Activated T-helper 1 cell treated with anti-CD3 and anti-CD28 coated beads, Interleukin-12 subunit alpha, Interleukin-12 subunit beta, Interleukin-2, Interleukin-4 antibody, amounts not matched to agents 30 ng/mL and 10 ng/mL and 1 ng/mL, durations not matched to agents 14 hours and 24 hours and 36 hours (primary cell): ENCODE measurements at regions of chr4 and their contacts with region 1.

Region 1: DNA sequence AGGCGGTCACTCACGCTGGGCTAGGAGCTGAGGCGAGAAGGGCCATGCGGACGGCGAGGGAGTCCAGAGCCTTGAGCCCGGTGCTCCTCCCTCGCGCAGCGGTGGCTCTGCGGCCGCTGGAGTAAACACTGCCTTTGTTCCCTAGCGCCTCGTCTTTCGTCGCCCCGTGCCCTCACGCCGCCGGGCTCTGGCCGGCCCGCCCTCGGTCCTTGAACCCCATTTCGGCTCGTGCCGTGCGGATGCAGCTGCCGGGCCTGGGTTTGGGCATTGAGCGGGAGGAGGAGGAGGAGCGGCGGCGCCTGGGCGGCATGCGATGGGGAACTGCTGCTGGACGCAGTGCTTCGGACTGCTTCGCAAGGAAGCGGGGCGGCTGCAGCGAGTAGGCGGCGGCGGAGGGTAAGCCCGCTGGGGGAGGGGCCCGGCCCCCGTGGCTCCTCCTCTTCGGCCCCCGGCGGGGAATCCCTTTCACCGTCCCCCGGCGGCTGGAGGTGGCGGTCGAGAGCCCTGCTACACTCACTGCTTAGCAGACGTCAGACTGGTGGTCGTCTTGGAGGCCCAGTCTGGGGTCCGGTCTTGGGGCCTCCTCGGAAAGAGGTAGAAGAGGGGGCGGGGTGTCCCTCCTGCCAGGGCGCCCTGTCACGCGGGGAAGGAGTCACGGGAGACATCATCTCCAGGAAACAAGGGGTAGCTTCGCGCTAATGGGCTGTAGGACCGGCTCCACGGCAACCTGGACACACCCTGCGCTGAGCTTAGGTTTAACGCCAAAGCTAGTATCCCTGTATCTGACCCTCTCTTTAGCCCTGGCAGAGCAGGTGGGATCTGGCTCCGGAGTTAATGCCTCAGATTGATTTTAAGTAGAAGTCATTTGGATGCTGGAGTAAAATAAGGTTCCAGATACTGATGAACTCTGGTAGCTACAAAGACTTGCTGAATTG is at the start of gene AP1AR:
- DNase-seq: peak; percentile 80
- H3K4me3 Mint-ChIP-seq: peak within 1 kb of the TSS; percentile 91
- H3K27ac Mint-ChIP-seq: peak within 1 kb of the TSS; percentile 98
- H3K4me1 Mint-ChIP-seq: peaks cover 34% of the 10 kb centered on the region
- H3K27me3 Mint-ChIP-seq: peaks cover 16% of the 10 kb centered on the region
- total RNA-seq, gene AP1AR: 25.1 and 26.6 TPM in 2 replicates

Region 2: GRCh38 chr4:111631215-111631999 is 600.6 kb before region 1 on chr4:
- intact Hi-C with region 1: no loop called
- DNase-seq: no peak
- H3K4me3 Mint-ChIP-seq: no peak overlapping the region
- H3K27ac Mint-ChIP-seq: no peak overlapping the region
- H3K4me1 Mint-ChIP-seq: no peaks in the 10 kb centered on the region
- H3K27me3 Mint-ChIP-seq: no peaks in the 10 kb centered on the region

Region 3: DNA sequence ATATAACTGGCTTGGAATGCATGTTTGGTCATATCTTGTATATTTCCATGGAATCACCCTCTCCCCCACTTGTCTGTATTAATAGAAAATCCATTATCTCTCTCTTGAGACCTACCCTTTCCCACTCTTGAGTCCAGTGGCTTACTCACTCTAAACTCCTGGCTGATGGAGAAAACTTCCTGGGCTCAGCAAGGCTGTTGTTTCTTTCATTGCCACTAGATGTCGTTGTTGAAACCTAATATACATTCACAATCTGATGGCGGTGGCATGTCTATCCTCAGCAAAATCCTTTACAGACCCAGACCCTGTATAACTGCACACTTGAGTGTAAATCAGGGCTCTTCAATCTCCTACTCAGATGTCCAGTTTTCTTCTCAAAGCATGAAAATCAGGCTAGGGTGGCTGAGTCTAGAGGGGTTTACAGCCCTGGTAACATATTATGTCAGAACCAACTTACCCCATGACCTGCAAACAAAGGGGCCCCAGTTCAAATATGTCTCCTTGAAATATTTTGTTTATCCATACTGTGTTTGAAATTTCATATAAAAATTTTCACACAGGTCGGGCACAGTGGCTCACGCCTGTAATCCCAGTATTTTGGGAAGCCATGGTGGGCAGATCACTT is 156.8 kb before region 1 on chr4:
- intact Hi-C with region 1: loop called (anchors 1 kb)
- DNase-seq: no peak
- H3K4me3 Mint-ChIP-seq: no peak overlapping the region
- H3K27ac Mint-ChIP-seq: no peak overlapping the region
- H3K4me1 Mint-ChIP-seq: no peaks in the 10 kb centered on the region
- H3K27me3 Mint-ChIP-seq: peaks cover 17% of the 10 kb centered on the region

Region 4: DNA sequence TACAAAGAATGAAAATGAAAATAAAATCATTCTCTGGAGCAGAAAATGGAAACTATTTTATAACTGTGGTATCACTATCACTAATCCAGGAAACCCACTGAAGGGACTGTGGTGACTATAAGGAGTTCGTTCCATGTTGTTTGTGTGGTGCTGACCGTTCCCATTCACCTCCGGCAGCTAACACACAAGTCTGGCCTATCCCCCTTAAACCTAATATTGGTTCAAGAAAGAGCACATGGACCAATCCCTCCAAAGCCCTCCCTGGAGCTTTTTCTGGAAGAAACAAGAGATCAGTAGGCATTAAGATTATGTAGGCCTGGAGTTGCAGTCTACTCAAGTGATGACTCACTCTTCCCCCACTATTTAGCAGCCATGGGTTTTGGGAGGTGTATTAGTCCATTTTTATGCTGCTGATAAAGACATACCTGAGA is 112.7 kb before region 1 on chr4:
- intact Hi-C with region 1: loop called (anchors 1 kb)
- DNase-seq: peak; percentile 21
- H3K4me3 Mint-ChIP-seq: peak overlapping the region; percentile 50
- H3K27ac Mint-ChIP-seq: peak overlapping the region; percentile 94
- H3K4me1 Mint-ChIP-seq: peaks cover 24% of the 10 kb centered on the region
- H3K27me3 Mint-ChIP-seq: no peaks in the 10 kb centered on the region

Region 5: GRCh38 chr4:112183252-112183651 is 48.8 kb before region 1 on chr4:
- intact Hi-C with region 1: loop called (anchors 5 kb)
- DNase-seq: no peak
- H3K4me3 Mint-ChIP-seq: peak overlapping the region; percentile 21
- H3K27ac Mint-ChIP-seq: peak overlapping the region; percentile 53
- H3K4me1 Mint-ChIP-seq: peaks cover 42% of the 10 kb centered on the region
- H3K27me3 Mint-ChIP-seq: no peaks in the 10 kb centered on the region

Region 6: GRCh38 chr4:112214390-112215264 is 17.4 kb before region 1 on chr4:
- intact Hi-C with region 1: loop called (anchors 1 kb)
- DNase-seq: no peak
- H3K4me3 Mint-ChIP-seq: no peak overlapping the region
- H3K27ac Mint-ChIP-seq: no peak overlapping the region
- H3K4me1 Mint-ChIP-seq: peaks cover 9% of the 10 kb centered on the region
- H3K27me3 Mint-ChIP-seq: no peaks in the 10 kb centered on the region

Region 7: GRCh38 chr4:112321776-112322684 is 90.0 kb after region 1 on chr4:
- intact Hi-C with region 1: loop called (anchors 1 kb)
- DNase-seq: peak; percentile 64
- H3K4me3 Mint-ChIP-seq: no peak overlapping the region
- H3K27ac Mint-ChIP-seq: no peak overlapping the region
- H3K4me1 Mint-ChIP-seq: peaks cover 52% of the 10 kb centered on the region
- H3K27me3 Mint-ChIP-seq: no peaks in the 10 kb centered on the region

Region 8: DNA sequence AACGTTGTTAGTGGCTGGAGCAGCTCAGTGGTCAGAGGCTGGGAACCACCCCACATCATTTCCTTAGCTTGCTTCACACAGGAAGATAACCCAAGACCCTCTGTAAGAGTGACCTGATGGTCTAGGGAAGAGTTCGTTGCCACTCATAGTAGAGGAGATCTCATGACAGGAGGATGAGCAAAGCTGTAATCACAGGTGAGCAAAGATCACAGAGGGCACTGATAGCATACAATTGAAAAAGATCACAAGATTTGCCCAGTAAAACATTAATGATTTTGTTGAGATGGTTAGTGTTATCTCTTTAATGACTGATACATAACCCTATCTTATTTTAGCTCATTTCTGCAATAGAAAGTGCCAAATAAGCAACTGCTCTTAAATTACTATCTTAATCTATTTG is 448.9 kb after region 1 on chr4:
- intact Hi-C with region 1: no loop called
- DNase-seq: no peak
- H3K4me3 Mint-ChIP-seq: no peak overlapping the region
- H3K27ac Mint-ChIP-seq: no peak overlapping the region
- H3K4me1 Mint-ChIP-seq: no peaks in the 10 kb centered on the region
- H3K27me3 Mint-ChIP-seq: peaks cover 5% of the 10 kb centered on the region